H1 (cell line): ENCODE measurements at regions of chr1 and their contacts with region 1.

Region 1: GRCh38 chr1:40951943-40952743 is 27.4 kb upstream of the CTPS1 start:
- DNase-seq: peak; percentile 67 to 93
- H3K4me3 ChIP-seq: no peak overlapping the region
- H3K27ac ChIP-seq: no peak overlapping the region
- H3K4me1 ChIP-seq: peaks cover 0 to 2% (median 0%) of the 10 kb centered on the region in 4 experiments; a peak in 3 of 7 replicates
- H3K27me3 ChIP-seq: no peaks in the 10 kb centered on the region; a peak in 2 of 7 replicates
- CTCF ChIP-seq: peak; percentile 94 to 98 (median 97)
- EP300 ChIP-seq: no peak
- POLR2A ChIP-seq: no peak
- RAD21 ChIP-seq: peak; percentile 99

Region 2: DNA sequence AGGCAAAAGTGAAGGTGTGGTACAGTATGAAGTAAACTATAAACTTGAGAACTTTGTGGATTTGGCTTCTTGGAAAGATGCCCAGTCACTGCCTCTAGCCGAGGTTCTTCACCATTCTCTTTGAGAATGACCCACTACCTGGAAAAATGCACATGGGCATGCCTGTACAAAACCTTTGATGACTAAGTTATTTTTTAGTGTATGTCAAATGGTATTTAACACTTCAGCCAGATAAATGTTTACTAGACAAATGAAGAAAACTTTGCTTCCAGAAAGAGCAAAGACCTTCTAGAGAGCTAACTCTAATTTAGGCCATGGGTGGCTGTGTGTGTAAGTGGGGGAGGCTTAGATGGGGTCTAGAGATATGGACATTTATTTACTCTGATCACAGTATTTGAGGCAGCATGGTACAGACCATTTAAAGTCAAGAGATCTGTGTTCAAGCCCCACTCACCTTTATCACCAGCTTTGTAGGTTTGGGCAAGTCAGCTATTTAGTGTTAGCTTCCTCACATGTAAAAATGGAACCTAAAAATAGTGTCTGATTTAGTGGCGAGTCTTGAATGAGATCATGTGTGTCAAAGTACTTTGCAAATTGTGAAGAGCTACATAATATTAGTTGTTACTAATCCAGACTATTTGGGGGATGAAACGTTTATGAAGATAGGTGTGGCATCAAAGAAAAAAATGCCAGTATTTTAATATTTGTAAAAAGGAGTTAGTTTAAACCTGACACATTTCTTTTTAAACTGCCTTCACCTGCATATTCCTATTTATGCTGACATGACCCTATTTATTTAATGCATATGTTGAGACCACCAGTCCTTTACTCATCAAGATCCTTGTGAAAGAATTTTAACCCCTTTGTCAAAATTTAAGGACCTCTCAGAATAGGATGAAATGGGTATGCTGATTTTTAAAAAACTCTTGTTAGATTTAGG is 240.4 kb before region 1 on chr1:
- CTCF ChIA-PET with region 1: no interaction called
- POLR2A ChIA-PET with region 1: no interaction called
- DNase-seq: no peak
- H3K4me3 ChIP-seq: peak overlapping the region; percentile 11 to 77 (median 48); a peak in 5 of 8 replicates
- H3K27ac ChIP-seq: no peak overlapping the region
- H3K4me1 ChIP-seq: peaks cover 0 to 7% (median 4%) of the 10 kb centered on the region in 4 experiments; a peak in 3 of 7 replicates
- H3K27me3 ChIP-seq: no peaks in the 10 kb centered on the region
- CTCF ChIP-seq: no peak
- EP300 ChIP-seq: no peak
- POLR2A ChIP-seq: no peak
- RAD21 ChIP-seq: no peak

Region 3: GRCh38 chr1:40783001-40783905 is 168.9 kb before region 1 on chr1 and contains the start of gene KCNQ4:
- CTCF ChIA-PET with region 1: interaction called, 94 read pairs
- POLR2A ChIA-PET with region 1: interaction called, 3 read pairs
- DNase-seq: peak in 1 of 2 experiments; percentile 71
- H3K4me3 ChIP-seq: peak within 1 kb of the TSS; percentile 36 to 81 (median 49)
- H3K27ac ChIP-seq: no peak within 1 kb of the TSS
- H3K4me1 ChIP-seq: peaks cover 0 to 23% (median 17%) of the 10 kb centered on the region in 4 experiments; a peak in 6 of 7 replicates
- H3K27me3 ChIP-seq: peaks cover 0 to 35% (median 27%) of the 10 kb centered on the region in 4 experiments; a peak in 6 of 7 replicates
- CTCF ChIP-seq: no peak
- EP300 ChIP-seq: no peak
- POLR2A ChIP-seq: no peak
- RAD21 ChIP-seq: no peak
- total RNA-seq, gene KCNQ4: 3.5 and 3.9 TPM in 2 replicates

Region 4: GRCh38 chr1:40862008-40862863 is 89.9 kb before region 1 on chr1 and contains the start of gene CITED4:
- CTCF ChIA-PET with region 1: interaction called, 917 read pairs
- POLR2A ChIA-PET with region 1: interaction called, 25 read pairs
- DNase-seq: peak; percentile 92 to 97
- H3K4me3 ChIP-seq: peak within 1 kb of the TSS; percentile 39 to 64 (median 48)
- H3K27ac ChIP-seq: peak within 1 kb of the TSS; percentile 19; the same call in 1 of the 2 replicates
- H3K4me1 ChIP-seq: peaks cover 4 to 8% (median 6%) of the 10 kb centered on the region in 4 experiments
- H3K27me3 ChIP-seq: peaks cover 0 to 20% (median 16%) of the 10 kb centered on the region in 4 experiments; a peak in 5 of 7 replicates
- CTCF ChIP-seq: peak; percentile 46 to 64 (median 58)
- EP300 ChIP-seq: no peak
- POLR2A ChIP-seq: peak; percentile 97 to 98
- RAD21 ChIP-seq: peak; percentile 70 to 78
- total RNA-seq, gene CITED4: 16.0 and 16.3 TPM in 2 replicates

Region 5: DNA sequence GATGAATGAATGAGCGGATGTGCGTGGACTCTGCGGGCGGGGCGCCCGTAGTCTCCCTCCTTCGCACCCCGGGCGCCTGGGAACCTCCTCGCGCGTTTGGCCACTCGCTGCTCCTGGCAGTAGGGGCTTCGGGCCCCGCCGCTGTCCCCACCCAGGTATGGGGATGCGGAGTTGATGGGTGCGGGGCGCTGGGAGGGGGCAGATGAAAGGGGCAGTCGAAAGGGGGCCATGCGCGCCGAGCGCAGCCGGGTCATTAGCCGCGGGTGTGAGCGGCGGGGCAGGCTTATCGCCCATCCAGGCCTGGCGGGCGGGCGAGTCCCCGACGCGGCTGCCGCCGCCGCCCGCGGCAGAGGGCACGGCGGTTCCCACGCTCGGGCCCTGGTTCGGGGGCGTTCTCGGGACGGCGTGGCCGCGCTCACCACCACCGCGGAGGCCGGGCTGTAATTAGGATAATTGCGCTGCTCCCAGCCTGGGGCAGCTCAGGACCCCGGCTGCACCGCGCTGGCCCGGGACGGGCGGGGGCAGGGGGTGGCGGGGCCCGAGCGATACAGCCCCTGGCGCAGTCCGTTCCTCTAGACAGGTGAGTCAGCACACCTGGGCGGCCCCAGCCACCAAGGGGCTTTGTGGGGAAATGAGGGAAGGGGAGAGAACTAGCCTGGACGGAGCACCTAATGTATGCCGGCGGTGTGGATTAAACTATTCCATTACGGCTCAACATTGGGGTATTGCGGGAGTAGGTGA is 67.9 kb before region 1 on chr1:
- CTCF ChIA-PET with region 1: interaction called, 14 read pairs
- POLR2A ChIA-PET with region 1: no interaction called
- DNase-seq: peak in 1 of 2 experiments; percentile 52
- H3K4me3 ChIP-seq: peak overlapping the region in 3 of 4 experiments; percentile 10 to 54 (median 17); a peak in 5 of 8 replicates
- H3K27ac ChIP-seq: no peak overlapping the region
- H3K4me1 ChIP-seq: peaks cover 0 to 5% (median 2%) of the 10 kb centered on the region in 4 experiments; a peak in 3 of 7 replicates
- H3K27me3 ChIP-seq: peaks cover 0 to 16% (median 5%) of the 10 kb centered on the region in 4 experiments; a peak in 5 of 7 replicates
- CTCF ChIP-seq: no peak
- EP300 ChIP-seq: no peak
- POLR2A ChIP-seq: no peak
- RAD21 ChIP-seq: no peak

Region 6: DNA sequence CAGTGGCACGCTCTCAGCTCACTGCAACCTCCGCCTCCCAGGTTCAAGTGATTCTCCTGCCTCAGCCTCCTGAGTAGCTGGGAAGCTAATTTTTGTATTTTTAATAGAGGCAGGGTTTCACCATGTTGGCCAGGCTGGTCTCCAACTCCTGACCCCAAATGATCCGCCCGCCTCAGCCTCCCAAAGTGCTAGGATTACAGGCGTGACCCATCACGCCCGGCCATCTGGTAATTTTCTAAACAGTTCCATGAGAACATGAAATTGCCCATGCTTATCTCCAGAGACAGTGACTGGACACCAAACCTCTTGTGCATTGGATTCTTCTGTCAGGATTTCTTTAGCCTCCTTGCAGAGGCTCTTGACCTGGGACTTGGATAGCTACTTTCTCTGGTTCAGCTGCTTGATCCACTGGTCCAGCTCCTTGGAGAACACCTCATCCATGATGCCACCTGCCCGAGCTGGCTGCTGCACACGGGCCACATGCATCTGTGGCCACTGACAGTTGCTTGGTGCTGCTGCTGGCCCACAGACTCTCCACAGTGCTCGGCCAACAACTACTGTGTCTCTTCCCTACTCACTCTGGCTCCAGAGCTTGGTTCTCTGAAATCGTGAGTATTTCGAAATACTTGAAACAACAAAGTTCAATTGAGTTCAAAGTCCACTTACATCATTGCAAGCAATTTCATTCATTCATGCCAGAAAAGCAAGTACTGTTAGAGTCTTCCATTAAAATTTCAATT is 12.7 kb before region 1 on chr1:
- CTCF ChIA-PET with region 1: interaction called, 82 read pairs
- POLR2A ChIA-PET with region 1: interaction called, 4 read pairs
- DNase-seq: no peak
- H3K4me3 ChIP-seq: no peak overlapping the region
- H3K27ac ChIP-seq: no peak overlapping the region
- H3K4me1 ChIP-seq: no peaks in the 10 kb centered on the region
- H3K27me3 ChIP-seq: no peaks in the 10 kb centered on the region
- CTCF ChIP-seq: no peak
- EP300 ChIP-seq: no peak
- POLR2A ChIP-seq: no peak
- RAD21 ChIP-seq: no peak